ENCODE measurements at regions of chr7 and their contacts with region 1.

Region 1: DNA sequence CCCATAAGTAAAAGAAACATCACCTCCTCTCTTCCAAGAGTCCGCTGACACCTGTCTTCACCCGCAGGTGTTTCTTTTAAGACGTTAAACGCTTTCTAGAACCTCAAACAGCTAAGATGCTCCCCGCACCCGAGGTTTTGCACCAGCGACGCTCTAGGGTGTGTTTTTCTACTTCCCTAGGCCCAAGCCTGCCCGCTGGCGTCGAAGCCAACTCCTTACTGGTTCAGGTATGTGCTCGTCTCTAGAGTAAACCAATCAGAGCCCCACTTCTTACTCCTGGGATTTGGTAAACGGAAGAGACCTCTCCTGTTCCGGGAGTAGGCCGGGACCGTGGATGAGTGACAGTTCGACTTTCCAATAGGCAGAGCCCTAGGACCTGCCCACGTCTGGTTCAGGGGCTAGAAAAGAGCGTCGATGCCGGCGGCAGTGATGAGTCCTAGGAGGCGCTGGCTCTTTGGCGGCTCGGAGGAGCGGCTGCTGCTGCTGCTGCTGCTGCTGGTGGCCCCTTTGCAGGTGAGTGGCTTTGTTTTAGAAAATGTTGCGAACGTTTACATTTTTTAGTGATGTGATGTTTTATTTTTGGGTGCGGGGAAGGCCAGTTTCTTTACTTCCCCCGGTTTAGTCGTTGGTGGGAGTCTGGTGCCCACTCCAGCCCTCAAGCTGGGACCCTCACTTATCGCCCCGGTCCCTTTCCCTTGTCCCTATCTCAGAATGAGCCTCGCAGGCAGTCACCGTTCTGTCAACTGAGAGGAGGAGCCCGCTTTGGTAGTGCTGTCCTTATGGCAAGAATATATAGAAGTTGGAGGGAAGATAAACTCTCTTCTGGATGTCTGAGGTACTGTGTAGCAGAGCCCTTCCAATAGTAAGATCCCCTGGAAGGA is at the start of gene BPGM:
- DNase-seq: peak; percentile 81 to 100 (median 98)
- ATAC-seq: peak; percentile 97
- H3K4me3 ChIP-seq: peak within 1 kb of the TSS; percentile 88
- H3K4me3 Mint-ChIP-seq: no peak within 1 kb of the TSS
- H3K27ac ChIP-seq: peak within 1 kb of the TSS; percentile 85
- H3K27ac Mint-ChIP-seq: no peak within 1 kb of the TSS
- H3K4me1 ChIP-seq: peaks cover 19 to 35% of the 10 kb centered on the region in 2 donors
- H3K4me1 Mint-ChIP-seq: peaks cover 21 to 45% (median 38%) of the 10 kb centered on the region in 7 donors
- H3K27me3 ChIP-seq: no peaks in the 10 kb centered on the region
- H3K27me3 Mint-ChIP-seq: no peaks in the 10 kb centered on the region
- total RNA-seq, gene BPGM: 12.7 to 19.2 (median 14.2) TPM

Region 2: DNA sequence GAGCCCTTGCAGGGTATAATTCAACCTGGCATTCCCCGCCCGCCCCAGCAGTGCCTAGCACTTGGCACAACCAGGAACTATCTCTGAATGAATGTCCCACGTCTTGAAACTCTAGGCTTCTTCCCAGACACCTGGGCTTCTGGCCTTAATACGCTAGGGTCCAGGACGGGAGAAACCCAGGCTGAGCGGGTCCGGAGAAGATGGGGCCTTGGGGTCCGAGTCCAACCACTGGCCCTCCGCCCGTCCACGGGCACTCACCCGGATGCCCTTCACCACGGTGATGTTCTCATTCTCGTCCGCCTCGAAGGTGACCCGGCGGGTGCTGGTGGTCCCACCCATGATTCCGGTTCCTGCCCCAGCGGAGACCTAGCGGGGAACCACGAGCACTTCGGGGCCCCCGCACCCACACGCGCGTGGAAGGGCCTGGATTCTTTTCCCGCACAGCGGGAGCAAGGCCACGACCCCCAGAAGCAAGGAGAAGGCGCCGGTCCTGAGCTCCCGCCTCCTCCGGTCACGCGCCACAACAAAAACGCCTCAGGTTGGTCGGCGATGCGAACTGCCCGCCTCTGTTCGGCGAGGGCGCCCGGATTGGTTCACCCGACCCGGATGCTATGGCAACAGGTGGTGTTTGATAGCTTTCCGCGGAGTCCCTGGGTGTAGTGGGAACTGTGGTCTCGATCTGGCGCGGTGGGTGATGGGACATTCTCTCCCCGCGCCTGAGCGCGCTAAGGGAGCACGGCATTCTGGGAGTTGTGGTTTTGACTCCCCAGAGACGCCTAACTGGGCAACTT is 1564.9 kb before region 1 on chr7 and contains the start of gene CHCHD3:
- CTCF ChIA-PET with region 1: no interaction called
- POLR2A ChIA-PET with region 1: no interaction called
- intact Hi-C with region 1: loop called in 1 of 2 experiments (anchors 5 kb)
- DNase-seq: peak; percentile 83 to 97 (median 95)
- ATAC-seq: peak; percentile 99
- H3K4me3 ChIP-seq: peak within 1 kb of the TSS; percentile 94
- H3K4me3 Mint-ChIP-seq: peak within 1 kb of the TSS; percentile 87 to 95 (median 92)
- H3K27ac ChIP-seq: peak within 1 kb of the TSS; percentile 93
- H3K27ac Mint-ChIP-seq: peak within 1 kb of the TSS; percentile 52 to 96 (median 93)
- H3K4me1 ChIP-seq: peaks cover 14 to 17% of the 10 kb centered on the region in 2 donors
- H3K4me1 Mint-ChIP-seq: peaks cover 13 to 44% (median 34%) of the 10 kb centered on the region in 7 donors
- H3K27me3 ChIP-seq: no peaks in the 10 kb centered on the region
- H3K27me3 Mint-ChIP-seq: peaks cover 0 to 7% (median 0%) of the 10 kb centered on the region in 5 donors
- total RNA-seq, gene CHCHD3: 25.6 to 44.6 (median 31.2) TPM

Region 3: DNA sequence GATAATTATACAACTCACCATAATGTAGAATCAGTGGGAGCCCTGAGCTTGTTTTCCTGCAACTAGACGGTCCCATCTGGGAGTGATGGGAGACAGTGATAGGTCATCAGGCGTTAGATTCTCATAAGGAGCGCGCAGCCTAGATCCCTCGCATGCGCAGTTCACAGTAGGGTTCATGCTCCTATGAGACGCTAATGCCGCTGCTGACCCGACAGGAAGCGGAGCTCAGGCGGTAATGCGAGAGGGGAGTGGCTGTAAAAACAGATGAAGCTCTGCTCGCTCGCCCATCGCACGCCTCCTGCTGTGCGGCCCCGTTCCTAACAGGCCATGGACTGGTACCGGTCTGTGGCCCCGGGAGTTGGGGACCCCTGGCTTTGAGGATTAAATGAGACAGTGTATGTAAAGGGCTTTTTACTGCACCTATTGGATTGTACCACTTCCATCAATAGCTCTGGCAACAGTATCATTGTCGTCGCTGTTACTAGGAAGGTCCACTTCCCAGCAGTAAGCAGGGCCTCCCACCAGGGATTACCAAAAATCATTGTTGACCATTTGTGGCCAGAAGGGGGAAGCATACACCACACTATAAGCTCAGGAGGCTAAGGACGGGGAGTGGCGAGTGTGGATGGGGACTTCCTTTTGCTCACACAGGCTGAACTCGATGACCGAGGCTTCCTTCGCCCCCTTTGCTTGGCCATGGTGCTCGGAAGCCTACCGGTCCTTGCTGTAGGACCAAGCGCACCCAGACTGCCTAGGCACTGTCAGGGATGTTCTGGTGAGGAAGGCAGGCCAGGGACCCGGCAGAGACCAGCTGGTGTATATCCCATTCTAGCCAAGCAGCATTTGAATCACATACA is 214.1 kb before region 1 on chr7:
- CTCF ChIA-PET with region 1: no interaction called
- POLR2A ChIA-PET with region 1: no interaction called
- intact Hi-C with region 1: loop called in 1 of 2 experiments (anchors 1 kb)
- DNase-seq: peak; percentile 39 to 74 (median 67)
- ATAC-seq: peak; percentile 94
- H3K4me3 ChIP-seq: peak overlapping the region; percentile 59
- H3K4me3 Mint-ChIP-seq: peak overlapping the region; percentile 79 to 91 (median 86)
- H3K27ac ChIP-seq: peak overlapping the region; percentile 37
- H3K27ac Mint-ChIP-seq: peak overlapping the region; percentile 71 to 93 (median 90)
- H3K4me1 ChIP-seq: peaks cover 4 to 14% of the 10 kb centered on the region in 2 donors
- H3K4me1 Mint-ChIP-seq: peaks cover 12 to 17% (median 15%) of the 10 kb centered on the region in 7 donors
- H3K27me3 ChIP-seq: no peaks in the 10 kb centered on the region
- H3K27me3 Mint-ChIP-seq: peaks cover 0 to 16% (median 0%) of the 10 kb centered on the region in 5 donors

Region 4: GRCh38 chr7:134669845-134670373 is 23.2 kb after region 1 on chr7:
- CTCF ChIA-PET with region 1: interaction called, 12 read pairs
- POLR2A ChIA-PET with region 1: interaction called, 154 read pairs
- intact Hi-C with region 1: loop called (anchors 1 kb)
- DNase-seq: peak; percentile 41 to 95 (median 92)
- ATAC-seq: peak; percentile 98
- H3K4me3 ChIP-seq: peak overlapping the region; percentile 25
- H3K4me3 Mint-ChIP-seq: peak overlapping the region; percentile 58 to 88 (median 82)
- H3K27ac ChIP-seq: peak overlapping the region; percentile 84
- H3K27ac Mint-ChIP-seq: peak overlapping the region; percentile 79 to 100 (median 96)
- H3K4me1 ChIP-seq: peaks cover 13 to 38% of the 10 kb centered on the region in 2 donors
- H3K4me1 Mint-ChIP-seq: peaks cover 14 to 69% (median 63%) of the 10 kb centered on the region in 7 donors
- H3K27me3 ChIP-seq: no peaks in the 10 kb centered on the region
- H3K27me3 Mint-ChIP-seq: no peaks in the 10 kb centered on the region

Region 5: DNA sequence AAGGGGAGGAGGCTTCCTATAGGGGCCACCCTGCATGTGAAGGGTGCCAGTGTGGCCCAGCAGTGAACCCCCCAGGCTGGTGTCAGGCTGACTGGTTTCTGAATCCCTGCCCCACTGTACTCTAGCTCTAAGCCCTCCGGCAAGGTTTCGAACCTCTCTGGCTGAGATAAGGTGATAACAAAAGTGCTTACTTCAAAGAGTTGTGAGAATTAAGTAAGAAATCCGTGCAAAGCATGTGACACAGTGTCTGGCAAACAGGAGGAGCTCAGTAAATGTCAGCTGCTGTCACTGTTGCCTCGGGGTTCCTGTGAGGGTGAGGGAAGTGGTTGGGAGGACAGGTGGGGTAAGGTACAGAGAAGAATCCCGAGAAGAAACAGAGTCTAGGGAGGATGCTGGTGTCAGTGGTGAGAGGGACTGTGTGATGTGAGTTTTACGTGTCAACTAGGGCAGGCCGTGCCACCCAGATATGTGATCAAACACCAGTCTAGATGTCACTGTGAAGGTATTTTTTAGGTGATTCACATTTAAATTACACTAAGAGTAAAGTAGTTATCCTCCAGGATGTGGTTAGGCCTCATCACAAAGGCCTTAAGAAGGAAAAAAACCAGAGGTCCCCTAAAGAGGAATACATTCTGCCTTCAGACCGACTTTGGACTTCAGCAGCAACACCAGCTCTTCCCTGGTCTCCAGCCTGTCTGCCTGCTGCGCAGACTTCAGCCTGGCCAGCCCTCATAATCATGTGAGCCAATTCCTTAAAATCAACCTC is 64.4 kb after region 1 on chr7:
- CTCF ChIA-PET with region 1: interaction called, 3 read pairs
- POLR2A ChIA-PET with region 1: interaction called, 14 read pairs
- intact Hi-C with region 1: loop called (anchors 1 kb)
- DNase-seq: peak; percentile 15 to 92 (median 88)
- ATAC-seq: peak; percentile 96
- H3K4me3 ChIP-seq: peak overlapping the region; percentile 15
- H3K4me3 Mint-ChIP-seq: peak overlapping the region; percentile 32 to 77 (median 66)
- H3K27ac ChIP-seq: peak overlapping the region; percentile 77
- H3K27ac Mint-ChIP-seq: peak overlapping the region; percentile 86 to 99 (median 94)
- H3K4me1 ChIP-seq: peaks cover 10 to 15% of the 10 kb centered on the region in 2 donors
- H3K4me1 Mint-ChIP-seq: peaks cover 11 to 32% (median 22%) of the 10 kb centered on the region in 7 donors
- H3K27me3 ChIP-seq: no peaks in the 10 kb centered on the region
- H3K27me3 Mint-ChIP-seq: no peaks in the 10 kb centered on the region

Region 6: DNA sequence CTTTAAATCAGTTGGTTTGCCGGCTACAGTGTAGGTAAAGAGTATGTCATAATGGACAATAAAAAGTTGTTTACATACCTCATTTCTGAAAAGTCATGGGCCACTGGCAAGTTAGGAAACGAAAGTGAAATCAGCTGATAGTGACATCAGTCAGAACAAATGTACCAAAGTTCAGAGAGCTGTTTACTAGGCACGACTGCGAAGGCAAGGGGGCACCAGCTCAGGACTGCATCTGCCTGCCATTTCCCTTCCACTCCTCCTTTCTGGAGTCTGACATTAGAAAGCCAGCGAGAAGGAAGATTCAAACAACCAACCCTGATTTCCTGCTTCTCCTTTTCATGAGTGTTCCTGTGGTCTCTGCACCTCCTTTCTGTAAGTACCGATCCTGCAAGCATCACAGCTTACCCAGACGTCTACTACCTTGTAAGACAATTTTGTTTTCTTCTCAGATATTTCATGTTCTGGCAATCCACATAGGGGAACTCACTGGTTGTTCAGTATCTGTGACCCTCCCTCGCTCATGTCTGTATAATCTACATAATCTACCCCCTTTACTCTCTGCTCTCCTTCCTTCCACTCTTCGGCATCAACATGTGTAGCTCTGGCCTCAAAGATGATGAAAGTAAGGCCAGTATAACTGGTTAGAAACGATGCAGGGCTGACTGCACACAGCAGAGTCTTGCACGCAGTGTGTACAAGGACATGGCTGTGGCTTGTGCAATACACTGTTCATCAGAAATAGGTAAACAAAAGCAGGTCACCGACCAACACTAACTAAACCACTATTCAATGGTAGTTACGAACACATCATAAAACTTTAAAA is 501.4 kb after region 1 on chr7 and contains the start of gene TMEM140:
- CTCF ChIA-PET with region 1: no interaction called
- POLR2A ChIA-PET with region 1: interaction called, 12 read pairs
- intact Hi-C with region 1: loop called (anchors 1 kb)
- DNase-seq: peak in 8 of 9 donors; percentile 56 to 88 (median 80)
- ATAC-seq: peak; percentile 84
- H3K4me3 ChIP-seq: peak within 1 kb of the TSS; percentile 71
- H3K4me3 Mint-ChIP-seq: peak within 1 kb of the TSS; percentile 83 to 95 (median 92)
- H3K27ac ChIP-seq: peak within 1 kb of the TSS; percentile 90
- H3K27ac Mint-ChIP-seq: peak within 1 kb of the TSS; percentile 93 to 99 (median 97)
- H3K4me1 ChIP-seq: peaks cover 31 to 38% of the 10 kb centered on the region in 2 donors
- H3K4me1 Mint-ChIP-seq: peaks cover 41 to 74% (median 70%) of the 10 kb centered on the region in 7 donors
- H3K27me3 ChIP-seq: no peaks in the 10 kb centered on the region
- H3K27me3 Mint-ChIP-seq: no peaks in the 10 kb centered on the region
- total RNA-seq, gene TMEM140: 17.8 to 44.7 (median 20.4) TPM

Region 7: DNA sequence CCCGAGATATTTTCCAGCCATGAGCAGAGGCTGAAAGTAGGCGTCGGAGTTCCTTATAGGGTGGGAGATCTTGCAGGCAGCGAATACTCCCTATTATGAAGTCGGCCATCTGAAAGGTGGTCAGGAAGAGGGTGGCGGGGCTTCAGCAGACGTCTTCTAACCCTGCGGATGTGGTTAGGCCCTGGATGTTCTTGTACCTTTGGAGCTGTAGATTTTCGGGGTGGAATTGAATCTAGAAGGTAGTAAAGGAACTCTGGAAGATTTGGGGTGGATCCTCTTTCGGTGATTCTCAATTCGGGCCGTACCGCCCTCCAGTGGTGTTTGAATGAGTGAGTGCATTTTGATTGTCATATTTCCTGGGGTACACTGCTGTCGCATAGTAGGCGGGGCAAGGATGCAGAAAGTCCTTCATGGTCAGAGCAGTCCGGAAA is 911.7 kb after region 1 on chr7:
- CTCF ChIA-PET with region 1: interaction called, 3 read pairs
- POLR2A ChIA-PET with region 1: no interaction called
- intact Hi-C with region 1: loop called (anchors 1 kb)
- DNase-seq: peak; percentile 36 to 71 (median 66)
- ATAC-seq: peak; percentile 78
- H3K4me3 ChIP-seq: peak overlapping the region; percentile 89
- H3K4me3 Mint-ChIP-seq: no peak overlapping the region
- H3K27ac ChIP-seq: peak overlapping the region; percentile 92
- H3K27ac Mint-ChIP-seq: no peak overlapping the region
- H3K4me1 ChIP-seq: peaks cover 6% of the 10 kb centered on the region in 2 donors
- H3K4me1 Mint-ChIP-seq: peaks cover 10 to 35% (median 25%) of the 10 kb centered on the region in 7 donors
- H3K27me3 ChIP-seq: no peaks in the 10 kb centered on the region
- H3K27me3 Mint-ChIP-seq: peaks cover 0 to 6% (median 0%) of the 10 kb centered on the region in 5 donors

Measured in naive thymus-derived CD4-positive, alpha-beta T cell (primary cell).